A549 (cell line): ENCODE measurements at regions of chr1 and their contacts with region 1.

Region 1: DNA sequence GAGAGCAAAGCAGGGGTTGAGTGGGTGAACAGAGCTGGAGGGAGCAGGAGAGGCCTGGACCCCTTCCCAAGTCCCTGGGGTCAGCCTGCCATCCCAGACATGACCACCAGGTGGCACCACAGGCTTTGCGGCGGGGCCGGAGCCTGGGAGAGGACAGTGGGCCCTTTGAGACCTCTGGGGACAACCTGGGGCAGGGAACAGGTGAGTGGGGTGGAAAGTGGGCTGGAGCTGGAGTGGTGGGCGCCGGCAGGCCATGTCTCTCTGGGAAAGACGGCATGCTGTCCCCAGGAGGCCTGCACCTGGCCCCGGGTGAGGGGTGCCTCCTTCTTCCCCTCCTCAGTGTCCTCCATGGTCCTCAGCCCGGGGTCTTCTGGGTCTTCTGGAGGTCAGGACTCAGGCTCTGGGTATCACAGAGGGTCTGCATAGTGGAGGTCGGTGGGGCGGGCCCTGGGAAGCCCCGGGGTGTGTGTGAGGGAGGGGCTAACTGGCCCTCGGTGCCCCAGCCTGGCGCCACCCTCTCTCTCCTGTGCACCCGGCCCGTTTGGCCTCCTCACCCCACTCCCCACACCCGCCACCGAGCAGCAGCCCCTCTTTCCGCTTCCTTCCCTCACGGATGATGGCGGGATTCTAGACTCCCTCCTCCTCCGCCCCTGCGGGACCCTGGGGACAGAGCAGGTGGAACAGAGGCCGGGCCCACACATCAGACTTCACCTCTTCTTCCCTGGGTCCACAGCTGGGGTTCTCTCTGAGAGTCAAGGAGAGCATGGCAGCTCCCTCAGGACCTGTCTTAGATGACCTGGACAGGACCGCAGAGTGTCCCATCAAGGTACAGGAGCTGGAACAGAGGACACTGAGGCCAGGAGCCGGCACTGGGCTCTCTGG is 28.4 kb upstream of the PKP1 start:
- DNase-seq: peak; percentile 47 to 89
- ATAC-seq: peak; percentile 78 to 95
- H3K4me3 ChIP-seq: no peak overlapping the region
- H3K27ac ChIP-seq: peak overlapping the region; percentile 63 to 64; a peak in 5 of 6 replicates
- H3K4me1 ChIP-seq: 0 out of 3 replicates have a peak, but pooled peaks cover 3% of the 10 kb centered on the region
- CTCF ChIP-seq: peak; percentile 98
- EP300 ChIP-seq: no peak
- POLR2A ChIP-seq: no peak
- RAD21 ChIP-seq: peak; percentile 99 to 100

Region 2: DNA sequence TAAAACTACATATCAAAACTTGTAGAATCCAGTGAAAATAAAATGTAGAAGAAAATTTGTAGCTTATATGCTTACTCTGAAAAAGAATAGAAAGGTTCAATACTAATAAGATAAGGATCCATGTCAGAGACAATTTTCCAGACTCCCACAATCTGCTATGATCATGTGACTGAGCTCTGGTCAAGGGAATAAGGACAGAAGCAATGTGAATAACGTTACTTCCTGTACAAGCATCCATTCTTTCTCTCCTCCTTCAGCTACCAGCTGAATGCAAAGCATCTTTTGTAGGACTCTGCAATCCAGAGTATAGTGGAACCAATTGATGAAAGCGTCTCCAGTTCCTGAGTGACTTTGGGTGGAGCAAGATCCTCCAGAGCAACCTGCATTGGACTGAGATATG is 10.8 kb before region 1 on chr1:
- CTCF ChIA-PET with region 1: interaction called, 35 read pairs
- POLR2A ChIA-PET with region 1: no interaction called
- DNase-seq: no peak
- ATAC-seq: no peak
- H3K4me3 ChIP-seq: no peak overlapping the region
- H3K27ac ChIP-seq: no peak overlapping the region
- H3K4me1 ChIP-seq: 0 out of 3 replicates have a peak, but pooled peaks cover 3% of the 10 kb centered on the region
- CTCF ChIP-seq: no peak
- EP300 ChIP-seq: no peak
- POLR2A ChIP-seq: no peak
- RAD21 ChIP-seq: no peak

Region 3: DNA sequence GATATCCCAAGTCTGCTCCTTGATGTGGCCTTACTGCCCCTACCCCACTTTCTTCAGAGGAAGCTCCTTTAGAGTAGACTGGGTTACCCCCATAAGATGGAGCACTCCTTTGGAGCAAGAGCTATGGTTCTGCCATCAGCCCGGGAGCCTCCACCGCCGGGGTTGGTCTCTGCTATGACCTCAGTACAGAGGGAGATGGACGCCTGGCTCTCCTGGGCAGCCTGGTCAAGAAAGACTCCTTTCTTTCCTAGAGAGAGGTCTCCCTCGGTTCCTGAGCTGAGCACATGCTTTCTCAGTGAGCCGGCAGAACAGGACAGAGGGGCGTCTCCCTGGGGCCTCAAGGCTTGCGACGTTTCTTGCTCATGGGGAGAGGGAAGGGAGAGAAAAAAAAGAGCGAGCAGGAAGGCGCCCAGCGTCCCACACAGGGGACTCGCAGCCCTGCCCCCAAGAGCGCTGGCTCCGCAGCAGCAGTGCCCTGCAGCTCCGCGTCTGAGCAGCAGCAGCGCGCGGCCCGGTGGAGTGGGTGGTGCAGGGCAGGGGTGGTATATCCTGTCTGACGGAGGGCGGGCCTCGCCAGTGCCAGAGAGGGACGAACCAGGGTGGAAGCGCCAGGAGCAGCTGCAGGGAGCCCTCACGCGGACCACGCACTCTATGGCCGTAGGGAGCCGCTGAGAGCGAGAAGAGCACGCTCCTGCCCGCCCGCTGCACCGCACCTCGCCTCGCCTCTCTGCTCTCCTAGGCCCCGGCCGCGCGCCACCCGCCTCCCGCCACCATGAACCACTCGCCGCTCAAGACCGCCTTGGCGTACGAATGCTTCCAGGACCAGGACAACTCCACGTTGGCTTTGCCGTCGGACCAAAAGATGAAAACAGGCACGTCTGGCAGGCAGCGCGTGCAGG is 28.3 kb after region 1 on chr1 and contains the start of gene PKP1:
- CTCF ChIA-PET with region 1: interaction called, 19 read pairs
- POLR2A ChIA-PET with region 1: no interaction called
- DNase-seq: no peak
- ATAC-seq: no peak; a peak in 1 of 6 replicates
- H3K4me3 ChIP-seq: no peak within 1 kb of the TSS
- H3K27ac ChIP-seq: no peak within 1 kb of the TSS; a peak in 1 of 6 replicates
- H3K4me1 ChIP-seq: peaks cover 5% of the 10 kb centered on the region; the same call in 2 of the 3 replicates
- CTCF ChIP-seq: no peak
- EP300 ChIP-seq: no peak
- POLR2A ChIP-seq: no peak
- RAD21 ChIP-seq: no peak
- polyA plus RNA-seq, gene PKP1: not detected in 2 replicates

Region 4: DNA sequence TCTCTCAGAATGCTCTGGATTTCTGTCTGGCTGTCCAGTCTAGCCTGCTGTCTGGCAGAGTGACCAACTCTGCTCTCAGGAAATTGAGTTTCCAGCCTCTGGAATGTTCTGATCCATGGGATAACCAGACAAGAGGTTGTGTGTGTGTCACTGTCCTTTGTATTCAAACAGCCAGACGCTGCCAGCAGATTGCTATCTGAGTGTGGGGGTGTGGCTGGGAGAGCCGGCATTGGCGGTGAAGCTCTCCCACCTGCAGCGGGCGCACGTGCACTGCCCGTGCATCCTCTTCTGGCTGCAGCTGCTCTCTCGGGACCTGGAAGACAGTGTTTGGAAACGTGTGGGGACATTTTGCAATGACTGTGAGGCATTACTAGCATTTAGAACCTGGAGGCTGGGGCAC is 54.6 kb after region 1 on chr1:
- CTCF ChIA-PET with region 1: interaction called, 32 read pairs
- POLR2A ChIA-PET with region 1: no interaction called
- DNase-seq: peak; percentile 48 to 62
- ATAC-seq: peak; percentile 31 to 57; a peak in 5 of 6 replicates
- H3K4me3 ChIP-seq: no peak overlapping the region
- H3K27ac ChIP-seq: peak overlapping the region; percentile 59 to 63; a peak in 4 of 6 replicates
- H3K4me1 ChIP-seq: peaks cover 48% of the 10 kb centered on the region
- CTCF ChIP-seq: no peak
- EP300 ChIP-seq: no peak
- POLR2A ChIP-seq: no peak
- RAD21 ChIP-seq: peak in 1 of 2 experiments; percentile 33; a peak in 3 of 5 replicates

Region 5: DNA sequence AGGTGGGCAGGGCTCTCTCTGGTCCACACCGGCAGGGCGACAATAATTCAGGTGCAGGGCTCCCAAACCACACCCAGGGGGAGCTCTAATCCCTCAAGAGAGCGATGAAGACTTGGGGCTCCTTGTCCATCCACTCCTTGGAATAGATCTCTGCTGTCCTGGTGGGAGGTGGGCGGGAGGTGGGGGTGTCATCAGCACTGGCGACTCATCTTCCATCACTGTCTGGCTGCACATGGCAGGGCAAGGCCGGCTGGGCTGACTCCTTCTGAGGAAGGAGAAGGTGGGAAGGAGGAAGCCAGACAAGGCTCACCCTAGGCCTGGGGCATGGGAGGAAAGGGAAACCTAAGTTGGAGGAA is 93.3 kb after region 1 on chr1:
- CTCF ChIA-PET with region 1: interaction called, 480 read pairs
- POLR2A ChIA-PET with region 1: no interaction called
- DNase-seq: peak; percentile 64 to 92
- ATAC-seq: peak; percentile 86 to 95
- H3K4me3 ChIP-seq: no peak overlapping the region
- H3K27ac ChIP-seq: no peak overlapping the region
- H3K4me1 ChIP-seq: 0 out of 3 replicates have a peak, but pooled peaks cover 5% of the 10 kb centered on the region
- CTCF ChIP-seq: peak; percentile 67
- EP300 ChIP-seq: no peak
- POLR2A ChIP-seq: no peak
- RAD21 ChIP-seq: peak; percentile 69 to 71

Region 6: GRCh38 chr1:201385299-201385891 is 130.5 kb after region 1 on chr1:
- CTCF ChIA-PET with region 1: interaction called, 11 read pairs
- POLR2A ChIA-PET with region 1: no interaction called
- DNase-seq: peak; percentile 61 to 76
- ATAC-seq: peak; percentile 85 to 95
- H3K4me3 ChIP-seq: no peak overlapping the region
- H3K27ac ChIP-seq: peak overlapping the region; percentile 63 to 77
- H3K4me1 ChIP-seq: peaks cover 32% of the 10 kb centered on the region
- CTCF ChIP-seq: peak; percentile 93
- EP300 ChIP-seq: no peak
- POLR2A ChIP-seq: no peak
- RAD21 ChIP-seq: peak; percentile 81 to 84

Region 7: DNA sequence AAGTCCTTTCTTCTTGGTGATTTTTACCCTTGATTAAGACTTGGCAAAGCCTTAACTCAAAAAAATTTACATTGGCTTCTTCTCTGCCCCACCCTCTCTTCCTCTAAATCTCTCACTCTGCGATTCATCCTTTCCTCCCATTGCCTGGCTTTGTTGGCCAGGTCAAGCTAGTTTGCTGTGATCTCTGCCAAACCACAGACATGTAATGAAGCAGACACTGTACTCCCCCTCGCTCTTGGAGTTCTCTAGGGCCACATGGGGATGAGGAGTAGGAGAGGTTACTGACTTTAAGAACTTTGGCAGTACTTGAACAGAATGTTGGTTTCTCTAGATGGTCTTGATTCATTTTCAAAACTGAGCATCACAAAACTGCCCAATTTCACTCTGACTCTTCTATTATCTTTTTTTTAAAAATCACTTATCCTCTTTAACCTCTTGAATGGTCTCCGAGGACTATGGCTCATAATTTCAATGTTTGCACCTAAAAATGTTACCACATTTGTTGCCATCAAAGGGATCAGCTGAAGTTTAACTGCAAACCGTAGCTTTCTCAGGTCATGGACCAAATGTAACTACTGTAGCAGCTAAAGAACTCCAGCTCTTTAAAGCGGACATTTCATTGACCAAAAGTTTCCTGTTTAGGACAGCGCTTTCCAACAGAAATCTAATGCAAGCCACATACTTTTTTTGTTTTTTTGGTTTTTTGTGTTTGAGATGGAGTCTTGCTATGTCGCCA is 511.4 kb after region 1 on chr1:
- CTCF ChIA-PET with region 1: no interaction called
- POLR2A ChIA-PET with region 1: no interaction called
- DNase-seq: no peak
- ATAC-seq: peak in 1 of 2 experiments; percentile 61; a peak in 2 of 6 replicates
- H3K4me3 ChIP-seq: no peak overlapping the region
- H3K27ac ChIP-seq: no peak overlapping the region
- H3K4me1 ChIP-seq: 0 out of 3 replicates have a peak, but pooled peaks cover 4% of the 10 kb centered on the region
- CTCF ChIP-seq: no peak
- EP300 ChIP-seq: no peak
- POLR2A ChIP-seq: no peak
- RAD21 ChIP-seq: no peak